Panc1 (cell line): ENCODE measurements at regions of chr1 and their contacts with region 1.

Region 1: DNA sequence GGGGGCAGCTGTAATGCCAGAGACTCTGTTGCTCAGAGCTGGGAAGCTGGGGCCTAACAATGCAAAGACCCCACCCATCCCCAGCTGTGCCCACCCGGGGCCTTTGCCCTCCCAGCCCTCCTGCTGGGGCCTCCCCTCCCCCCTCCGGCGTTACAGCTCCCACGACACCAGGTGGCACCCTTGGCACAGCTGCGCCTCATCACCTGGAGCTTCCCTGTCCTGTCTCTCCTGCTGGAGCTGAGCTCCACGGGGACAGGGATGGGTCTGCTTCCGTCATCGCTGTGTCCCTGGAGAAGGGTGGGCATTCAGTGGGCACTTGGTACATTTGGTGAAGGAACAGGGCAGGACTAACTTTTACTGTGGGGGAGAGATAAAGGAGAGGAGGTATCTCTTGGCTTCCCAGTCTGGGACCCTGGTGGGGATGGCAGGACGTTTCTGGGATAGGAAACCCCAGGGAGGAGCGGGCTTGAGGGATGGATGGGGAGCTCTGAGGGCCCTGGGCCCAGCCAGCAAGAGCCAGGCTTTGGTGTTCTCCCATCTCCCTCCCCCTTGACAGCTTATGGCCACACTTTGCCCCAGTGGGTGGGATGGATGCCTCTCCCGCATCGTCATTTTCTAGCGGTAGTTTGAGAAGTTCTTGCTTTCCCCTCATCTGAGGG is 453.2 kb downstream of the PTPRU start:
- DNase-seq: no peak
- ATAC-seq: no peak
- H3K4me3 ChIP-seq: no peak overlapping the region
- H3K27ac ChIP-seq: no peak overlapping the region
- H3K4me1 ChIP-seq: no peaks in the 10 kb centered on the region; the same call in 1 of the 2 replicates
- H3K27me3 ChIP-seq: peaks cover 5% of the 10 kb centered on the region
- CTCF ChIP-seq: no peak

Region 2: GRCh38 chr1:29835874-29836273 is 146.4 kb after region 1 on chr1:
- CTCF ChIA-PET with region 1: interaction called, 13 read pairs
- POLR2A ChIA-PET with region 1: no interaction called
- in situ Hi-C with region 1: no loop called
- intact Hi-C with region 1: no loop called
- DNase-seq: no peak
- ATAC-seq: no peak
- H3K4me3 ChIP-seq: no peak overlapping the region
- H3K27ac ChIP-seq: no peak overlapping the region
- H3K4me1 ChIP-seq: no peaks in the 10 kb centered on the region
- H3K27me3 ChIP-seq: no peaks in the 10 kb centered on the region
- CTCF ChIP-seq: no peak